ENCODE measurements at regions of chr10 and their contacts with region 1.

Region 1: DNA sequence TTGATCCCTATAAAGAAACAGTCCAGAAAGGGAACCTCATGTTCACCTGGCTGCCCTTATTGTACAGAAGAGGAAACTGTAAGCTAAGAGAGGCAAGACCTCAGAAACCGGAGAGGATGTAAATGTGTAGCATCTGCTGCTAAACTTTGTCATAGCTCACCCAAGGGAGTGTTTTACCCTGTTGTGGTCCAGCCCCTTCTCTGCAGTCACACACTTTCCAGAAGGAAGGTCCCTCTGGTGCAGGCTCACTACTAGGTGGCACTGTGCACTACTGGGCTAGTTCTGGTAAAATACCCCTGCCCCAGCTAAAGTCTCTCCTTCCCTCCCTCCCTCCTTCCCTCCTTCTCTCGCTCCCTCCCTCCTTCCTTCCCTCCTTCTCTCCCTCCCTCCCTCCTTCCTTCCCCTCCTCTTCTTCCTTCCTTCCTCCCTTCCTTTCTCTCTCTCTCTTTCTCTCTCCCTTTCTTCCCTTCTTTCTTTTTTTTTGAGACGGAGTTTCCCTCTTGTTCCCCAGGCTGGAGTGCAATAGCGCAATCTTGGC is 42.5 kb upstream of the LCOR start:
- DNase-seq: peak; percentile 68 to 79 (median 70)
- ATAC-seq: peak; percentile 99
- H3K4me3 ChIP-seq: no peak overlapping the region
- H3K27ac ChIP-seq: no peak overlapping the region
- H3K4me1 ChIP-seq: no peaks in the 10 kb centered on the region; a peak in 1 of 5 replicates
- H3K27me3 ChIP-seq: no peaks in the 10 kb centered on the region
- CTCF ChIP-seq: peak; percentile 77 to 85 (median 83)
- EP300 ChIP-seq: no peak
- POLR2A ChIP-seq: no peak
- RAD21 ChIP-seq: peak; percentile 46 to 77; a peak in 3 of 4 replicates

Region 2: GRCh38 chr10:96743988-96744585 is 45.6 kb before region 1 on chr10:
- CTCF ChIA-PET with region 1: no interaction called
- POLR2A ChIA-PET with region 1: no interaction called
- in situ Hi-C with region 1: no loop called
- intact Hi-C with region 1: no loop called
- DNase-seq: peak in 1 of 4 experiments; percentile 27
- ATAC-seq: peak; percentile 75
- H3K4me3 ChIP-seq: no peak overlapping the region
- H3K27ac ChIP-seq: no peak overlapping the region
- H3K4me1 ChIP-seq: peaks cover 3 to 5% of the 10 kb centered on the region in 2 experiments; a peak in 2 of 5 replicates
- H3K27me3 ChIP-seq: no peaks in the 10 kb centered on the region
- CTCF ChIP-seq: peak; percentile 33 to 56 (median 48); a peak in 5 of 6 replicates
- EP300 ChIP-seq: no peak
- POLR2A ChIP-seq: no peak
- RAD21 ChIP-seq: peak; percentile 58 to 73

Region 3: DNA sequence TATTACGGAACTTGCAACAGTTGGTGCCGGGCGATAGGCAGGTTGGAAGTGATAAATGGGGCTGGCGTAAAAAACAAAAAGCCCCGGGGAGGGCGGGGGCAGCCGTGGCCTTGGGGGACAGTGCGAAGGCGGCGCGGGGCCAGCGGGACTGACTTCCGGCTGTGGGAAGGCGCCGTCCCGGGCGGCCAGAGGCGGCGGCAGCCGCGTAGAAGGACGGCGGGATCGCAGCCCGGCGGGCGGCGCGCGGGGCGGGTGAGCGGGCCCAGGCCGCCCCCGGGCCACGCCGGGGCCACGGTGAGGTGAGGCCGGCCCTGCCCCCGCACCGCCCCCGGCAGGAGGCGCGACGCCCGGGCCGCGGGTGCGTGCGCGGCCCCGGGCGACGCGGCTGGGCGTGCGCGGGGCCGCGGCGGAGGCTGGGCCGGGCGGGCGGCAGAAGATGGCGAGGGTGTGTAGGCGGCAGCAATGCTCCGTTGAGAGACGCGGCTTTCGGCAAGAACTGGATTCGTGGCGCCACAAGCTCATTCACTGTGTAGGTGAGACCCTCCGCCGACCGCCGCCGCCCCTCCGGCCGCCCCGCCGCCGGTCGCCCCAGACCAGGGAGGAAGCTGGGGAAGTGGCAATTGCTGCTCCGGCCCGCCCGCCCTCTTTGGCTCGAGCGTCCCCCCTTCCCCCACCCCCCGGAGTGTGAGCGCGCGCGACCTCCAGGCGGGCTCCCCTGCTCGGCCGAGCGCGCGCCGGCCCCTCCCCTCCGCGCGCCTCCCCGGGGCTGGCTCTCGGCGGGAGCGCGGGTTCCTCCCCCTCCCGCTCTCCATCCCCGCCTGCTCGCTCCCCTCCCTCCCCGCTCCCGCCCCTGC is 42.5 kb after region 1 on chr10 and contains the start of gene LCOR:
- CTCF ChIA-PET with region 1: no interaction called
- POLR2A ChIA-PET with region 1: no interaction called
- in situ Hi-C with region 1: no loop called
- intact Hi-C with region 1: loop called (anchors 1 kb)
- DNase-seq: peak; percentile 85 to 93 (median 89)
- ATAC-seq: peak; percentile 79
- H3K4me3 ChIP-seq: peak within 1 kb of the TSS; percentile 79
- H3K27ac ChIP-seq: peak within 1 kb of the TSS; percentile 97
- H3K4me1 ChIP-seq: peaks cover 13 to 31% of the 10 kb centered on the region in 2 experiments; a peak in 4 of 5 replicates
- H3K27me3 ChIP-seq: no peaks in the 10 kb centered on the region
- CTCF ChIP-seq: no peak; a peak in 1 of 6 replicates
- EP300 ChIP-seq: peak; percentile 81
- POLR2A ChIP-seq: peak; percentile 71
- RAD21 ChIP-seq: no peak
- polyA plus RNA-seq, gene LCOR: 3.6 to 7.2 TPM

Region 4: GRCh38 chr10:97025613-97026242 is 236.1 kb after region 1 on chr10:
- CTCF ChIA-PET with region 1: no interaction called
- POLR2A ChIA-PET with region 1: no interaction called
- in situ Hi-C with region 1: no loop called
- intact Hi-C with region 1: loop called (anchors 5 kb)
- DNase-seq: peak; percentile 52 to 65 (median 57)
- ATAC-seq: peak; percentile 94
- H3K4me3 ChIP-seq: no peak overlapping the region
- H3K27ac ChIP-seq: no peak overlapping the region
- H3K4me1 ChIP-seq: peaks cover 0 to 4% of the 10 kb centered on the region in 2 experiments; a peak in 2 of 5 replicates
- H3K27me3 ChIP-seq: peaks cover 9 to 29% of the 10 kb centered on the region in 2 experiments; a peak in 4 of 5 replicates
- CTCF ChIP-seq: peak; percentile 64 to 73 (median 73)
- EP300 ChIP-seq: no peak
- POLR2A ChIP-seq: no peak
- RAD21 ChIP-seq: peak in 1 of 2 experiments; percentile 63; a peak in 2 of 4 replicates